ENCODE measurements at regions of chr1 and their contacts with region 1.

Region 1: GRCh38 chr1:109850194-109850593 is 60.5 kb upstream of the CSF1 start:
- DNase-seq: no peak
- ATAC-seq: no peak
- H3K4me3 ChIP-seq: no peak overlapping the region
- H3K27ac ChIP-seq: no peak overlapping the region
- H3K4me1 ChIP-seq: peaks cover 0 to 19% (median 11%) of the 10 kb centered on the region in 9 donors
- H3K27me3 ChIP-seq: no peaks in the 10 kb centered on the region
- CTCF ChIP-seq: no peak

Region 2: GRCh38 chr1:109790735-109791494 is 59.3 kb before region 1 on chr1:
- intact Hi-C with region 1: loop called in 1 of 10 experiments (anchors 5 kb)
- DNase-seq: peak; percentile 55 to 63
- ATAC-seq: peak; percentile 54 to 72 (median 66)
- H3K4me3 ChIP-seq: no peak overlapping the region
- H3K27ac ChIP-seq: peak overlapping the region in 9 of 10 donors; percentile 5 to 80 (median 47)
- H3K4me1 ChIP-seq: peaks cover 33 to 78% (median 62%) of the 10 kb centered on the region in 9 donors
- H3K27me3 ChIP-seq: no peaks in the 10 kb centered on the region
- CTCF ChIP-seq: peak in 8 of 9 donors; percentile 37 to 73 (median 60)

Region 3: GRCh38 chr1:109877320-109877771 is 27.2 kb after region 1 on chr1:
- intact Hi-C with region 1: loop called in 1 of 10 experiments (anchors 2 kb)
- DNase-seq: peak; percentile 66 to 68
- ATAC-seq: peak; percentile 85 to 94 (median 89)
- H3K4me3 ChIP-seq: peak overlapping the region in 5 of 10 donors; percentile 9 to 24 (median 15)
- H3K27ac ChIP-seq: peak overlapping the region; percentile 19 to 92 (median 84)
- H3K4me1 ChIP-seq: peaks cover 0 to 59% (median 24%) of the 10 kb centered on the region in 9 donors
- H3K27me3 ChIP-seq: no peaks in the 10 kb centered on the region
- CTCF ChIP-seq: peak in 7 of 9 donors; percentile 9 to 51 (median 24)

Region 4: GRCh38 chr1:109895720-109896504 is 45.7 kb after region 1 on chr1:
- intact Hi-C with region 1: loop called in 2 of 10 experiments (anchors 5 kb)
- DNase-seq: peak; percentile 63 to 82
- ATAC-seq: peak; percentile 70 to 88 (median 82)
- H3K4me3 ChIP-seq: peak overlapping the region in 1 of 10 donors; percentile 15
- H3K27ac ChIP-seq: peak overlapping the region in 9 of 10 donors; percentile 61 to 85 (median 72)
- H3K4me1 ChIP-seq: peaks cover 9 to 92% (median 64%) of the 10 kb centered on the region in 9 donors
- H3K27me3 ChIP-seq: no peaks in the 10 kb centered on the region
- CTCF ChIP-seq: no peak